Gastrocnemius medialis (tissue), 4 donors: ENCODE measurements at regions of chr12 and their contacts with region 1.

Region 1: GRCh38 chr12:14167005-14167628 is 185.7 kb upstream of the GRIN2B start:
- DNase-seq: no peak
- ATAC-seq: peak in 1 of 2 donors; percentile 42
- H3K4me3 ChIP-seq: no peak overlapping the region
- H3K27ac ChIP-seq: no peak overlapping the region
- H3K4me1 ChIP-seq: no peaks in the 10 kb centered on the region
- H3K27me3 ChIP-seq: no peaks in the 10 kb centered on the region
- CTCF ChIP-seq: peak; percentile 43 to 87 (median 69)
- POLR2A ChIP-seq: no peak

Region 2: DNA sequence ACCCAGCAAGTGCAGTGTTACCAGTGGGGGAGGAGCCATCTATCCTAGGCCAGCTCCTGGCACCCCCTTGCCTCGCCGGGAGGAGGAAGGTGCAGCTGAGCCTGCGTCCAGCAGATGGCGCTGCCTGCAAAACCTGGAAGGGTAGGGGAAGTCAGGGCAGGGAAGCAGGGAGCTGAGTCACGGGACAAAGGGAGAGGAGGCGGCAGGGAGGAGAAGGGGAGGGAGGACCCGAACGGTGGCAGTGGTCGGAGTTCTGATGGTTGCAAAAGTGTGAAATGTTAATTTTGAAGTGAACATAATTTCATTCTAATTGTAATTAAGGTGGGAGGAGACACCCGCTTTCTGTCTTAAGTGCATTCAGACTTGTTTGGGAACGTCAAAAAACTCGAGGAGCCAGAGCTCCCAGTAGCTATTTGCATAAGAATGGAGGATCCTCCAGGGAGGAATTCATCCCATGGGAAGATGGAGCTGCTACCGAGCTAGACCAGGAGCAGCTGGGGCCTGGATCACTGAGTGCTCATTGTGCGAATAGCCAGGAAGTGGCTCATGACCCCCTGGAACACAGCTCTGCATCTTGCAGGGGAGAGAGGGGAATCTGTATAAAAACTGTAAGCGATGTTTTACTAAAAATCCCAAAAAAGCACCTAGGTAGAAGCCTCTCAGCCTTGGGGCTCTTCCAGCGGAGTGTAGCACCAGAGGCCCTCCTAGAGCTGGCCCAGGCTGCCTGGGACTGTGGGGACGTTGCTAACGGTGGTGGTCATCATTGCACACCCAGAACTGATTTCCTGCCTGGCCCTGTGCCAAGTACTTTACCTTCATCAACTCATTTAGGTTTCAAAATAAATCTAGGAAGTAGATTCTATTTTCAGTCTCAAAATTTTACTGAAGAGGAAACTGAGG is 911.1 kb before region 1 on chr12:
- in situ Hi-C with region 1: loop called in 1 of 4 experiments (anchors 25 kb)
- intact Hi-C with region 1: no loop called
- DNase-seq: peak; percentile 72 to 90
- ATAC-seq: peak; percentile 97 to 98
- H3K4me3 ChIP-seq: peak overlapping the region; percentile 36 to 46 (median 42)
- H3K27ac ChIP-seq: no peak overlapping the region
- H3K4me1 ChIP-seq: peaks cover 0 to 10% of the 10 kb centered on the region in 2 donors
- H3K27me3 ChIP-seq: no peaks in the 10 kb centered on the region
- CTCF ChIP-seq: peak; percentile 76 to 91 (median 85)
- POLR2A ChIP-seq: no peak

Region 3: DNA sequence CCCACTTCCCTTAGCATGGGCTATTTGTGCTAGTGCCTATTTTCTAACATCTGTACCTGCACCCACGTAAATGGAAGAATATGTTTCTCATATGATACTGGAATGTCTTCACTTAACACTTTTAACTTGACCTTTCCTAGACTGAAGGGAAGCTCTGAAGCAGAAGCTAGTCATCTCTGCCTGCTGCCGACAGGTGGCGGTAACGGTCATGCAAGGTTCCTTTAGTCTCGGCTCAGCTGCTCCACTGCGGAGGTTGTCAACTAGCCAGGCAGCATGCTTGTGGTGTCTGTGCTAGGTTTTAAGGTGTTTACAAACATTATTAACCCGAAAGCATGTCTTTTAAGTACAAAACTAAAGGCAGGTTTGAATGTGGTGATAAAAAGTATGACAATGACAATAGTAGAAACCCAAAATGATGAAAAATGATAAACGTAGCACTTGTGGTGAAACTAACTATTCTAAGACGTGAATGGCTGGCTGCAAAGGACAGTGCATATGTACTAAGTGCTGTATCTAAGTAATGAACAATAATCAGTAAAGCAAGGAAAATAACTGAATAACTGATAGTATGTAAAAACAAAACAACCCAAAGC is 302.9 kb before region 1 on chr12:
- in situ Hi-C with region 1: loop called in 3 of 4 experiments (anchors 10 to 25 kb)
- intact Hi-C with region 1: loop called (anchors 5 kb)
- DNase-seq: peak in 1 of 2 donors; percentile 26
- ATAC-seq: peak in 1 of 2 donors; percentile 51
- H3K4me3 ChIP-seq: no peak overlapping the region
- H3K27ac ChIP-seq: no peak overlapping the region
- H3K4me1 ChIP-seq: no peaks in the 10 kb centered on the region
- H3K27me3 ChIP-seq: no peaks in the 10 kb centered on the region
- CTCF ChIP-seq: peak in 4 of 5 experiments; percentile 38 to 67 (median 58)
- POLR2A ChIP-seq: no peak

Region 4: GRCh38 chr12:14193639-14194038 is 26.5 kb after region 1 on chr12:
- in situ Hi-C with region 1: no loop called
- intact Hi-C with region 1: no loop called
- DNase-seq: no peak
- ATAC-seq: no peak
- H3K4me3 ChIP-seq: no peak overlapping the region
- H3K27ac ChIP-seq: no peak overlapping the region
- H3K4me1 ChIP-seq: no peaks in the 10 kb centered on the region
- H3K27me3 ChIP-seq: no peaks in the 10 kb centered on the region
- CTCF ChIP-seq: no peak
- POLR2A ChIP-seq: no peak